PC-9 (cell line): ENCODE measurements at regions of chr20 and their contacts with region 1.

Region 1: DNA sequence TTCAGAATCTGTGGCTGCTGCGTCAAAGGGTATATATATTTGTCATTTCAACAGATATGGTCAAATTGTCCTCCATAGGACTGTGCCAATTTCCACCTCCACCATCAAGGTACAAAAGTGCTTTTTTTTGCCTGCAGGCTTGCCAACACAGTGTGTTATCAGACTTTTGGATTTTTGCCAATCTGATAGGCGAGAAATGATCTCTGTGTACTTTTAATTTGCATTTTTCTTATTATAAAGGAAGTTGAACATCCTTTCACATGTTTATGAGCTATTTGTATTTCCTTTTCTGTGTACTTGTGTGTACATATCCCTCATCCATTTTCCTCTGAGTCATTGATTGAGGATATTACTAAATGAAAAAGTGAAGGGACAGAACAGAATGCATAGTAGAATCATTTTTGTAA is 39.0 kb upstream of the PTPN1 start:
- DNase-seq: peak in 1 of 2 experiments; percentile 80
- H3K4me3 ChIP-seq: no peak overlapping the region
- H3K27ac ChIP-seq: no peak overlapping the region
- H3K4me1 ChIP-seq: peaks cover 28% of the 10 kb centered on the region
- H3K27me3 ChIP-seq: no peaks in the 10 kb centered on the region
- CTCF ChIP-seq: no peak

Region 2: GRCh38 chr20:50426866-50427739 is 44.1 kb before region 1 on chr20:
- CTCF ChIA-PET with region 1: no interaction called
- POLR2A ChIA-PET with region 1: interaction called, 23 read pairs
- intact Hi-C with region 1: no loop called
- DNase-seq: no peak
- H3K4me3 ChIP-seq: no peak overlapping the region
- H3K27ac ChIP-seq: no peak overlapping the region
- H3K4me1 ChIP-seq: peaks cover 50% of the 10 kb centered on the region
- H3K27me3 ChIP-seq: no peaks in the 10 kb centered on the region
- CTCF ChIP-seq: no peak

Region 3: DNA sequence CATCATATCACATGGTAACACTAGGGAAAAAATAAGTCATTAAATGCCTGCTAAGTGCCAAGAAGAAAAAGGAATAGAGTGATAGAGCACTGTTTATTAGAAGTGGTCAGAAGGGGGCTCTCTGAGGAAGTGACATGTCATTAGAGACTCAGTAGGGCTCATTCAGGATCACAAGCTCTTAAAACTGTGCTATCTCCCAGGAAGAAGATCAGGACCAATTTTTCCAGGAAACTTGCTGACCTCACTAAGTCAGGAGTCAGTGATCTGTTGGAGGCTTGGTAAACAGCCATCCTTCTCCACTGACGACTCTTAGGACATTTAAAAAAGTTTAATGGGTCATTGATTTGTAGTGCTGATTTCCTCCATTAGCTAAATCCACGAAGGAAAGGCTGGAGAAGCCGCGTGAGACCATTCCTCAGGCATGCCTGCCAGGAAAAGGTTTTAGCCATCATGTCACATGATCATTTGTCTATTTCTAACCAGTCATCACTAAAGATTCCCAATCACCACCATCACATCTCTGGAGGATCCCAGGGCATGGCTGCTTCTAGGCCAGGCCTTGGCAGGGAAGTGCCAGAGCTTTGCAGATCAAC is 33.1 kb after region 1 on chr20:
- CTCF ChIA-PET with region 1: interaction called, 10 read pairs
- POLR2A ChIA-PET with region 1: no interaction called
- intact Hi-C with region 1: no loop called
- DNase-seq: no peak
- H3K4me3 ChIP-seq: no peak overlapping the region
- H3K27ac ChIP-seq: no peak overlapping the region
- H3K4me1 ChIP-seq: peaks cover 3% of the 10 kb centered on the region
- H3K27me3 ChIP-seq: no peaks in the 10 kb centered on the region
- CTCF ChIP-seq: no peak

Region 4: GRCh38 chr20:50546729-50547314 is 75.6 kb after region 1 on chr20:
- CTCF ChIA-PET with region 1: no interaction called
- POLR2A ChIA-PET with region 1: no interaction called
- intact Hi-C with region 1: no loop called
- DNase-seq: no peak
- H3K4me3 ChIP-seq: no peak overlapping the region
- H3K27ac ChIP-seq: peak overlapping the region; percentile 30; the same call in 1 of the 2 replicates
- H3K4me1 ChIP-seq: peaks cover 11% of the 10 kb centered on the region
- H3K27me3 ChIP-seq: no peaks in the 10 kb centered on the region
- CTCF ChIP-seq: no peak